Uterus (tissue), 4 donors: ENCODE measurements at regions of chr1 and their contacts with region 1.

Region 1: GRCh38 chr1:7150724-7151280 is 365.5 kb downstream of the CAMTA1 start:
- DNase-seq: no peak
- H3K4me3 ChIP-seq: no peak overlapping the region
- H3K27ac ChIP-seq: no peak overlapping the region
- H3K4me1 ChIP-seq: no peaks in the 10 kb centered on the region
- H3K27me3 ChIP-seq: no peaks in the 10 kb centered on the region
- CTCF ChIP-seq: no peak
- POLR2A ChIP-seq: no peak

Region 2: GRCh38 chr1:7199077-7199779 is 48.4 kb after region 1 on chr1:
- intact Hi-C with region 1: loop called (anchors 2 kb)
- DNase-seq: no peak
- H3K4me3 ChIP-seq: no peak overlapping the region
- H3K27ac ChIP-seq: no peak overlapping the region
- H3K4me1 ChIP-seq: no peaks in the 10 kb centered on the region
- H3K27me3 ChIP-seq: peaks cover 0 to 4% of the 10 kb centered on the region in 2 donors
- CTCF ChIP-seq: no peak
- POLR2A ChIP-seq: no peak

Region 3: DNA sequence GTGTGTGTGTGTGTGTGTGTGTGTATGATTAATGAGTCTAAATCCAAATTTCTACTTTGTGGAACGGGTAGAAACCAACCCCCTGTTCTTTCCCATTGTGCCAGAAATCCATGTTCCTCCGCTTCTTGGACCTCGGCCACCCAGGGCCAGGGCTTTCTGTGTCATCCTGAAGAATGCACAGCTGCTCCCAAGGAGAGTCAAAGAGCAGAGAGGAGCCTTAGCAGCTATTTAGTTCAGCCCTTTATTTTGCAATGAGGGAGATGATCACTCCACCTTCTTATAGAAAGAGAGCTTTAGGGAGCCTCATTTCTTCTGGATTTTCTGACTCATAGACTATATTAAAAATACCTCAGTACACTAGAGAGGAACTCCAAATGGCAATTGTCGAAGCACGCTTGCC is 131.0 kb after region 1 on chr1:
- intact Hi-C with region 1: no loop called
- DNase-seq: no peak
- H3K4me3 ChIP-seq: no peak overlapping the region
- H3K27ac ChIP-seq: no peak overlapping the region
- H3K4me1 ChIP-seq: no peaks in the 10 kb centered on the region
- H3K27me3 ChIP-seq: no peaks in the 10 kb centered on the region
- CTCF ChIP-seq: no peak
- POLR2A ChIP-seq: no peak